Right lobe of liver (tissue), 6 donors: ENCODE measurements at regions of chr4 and their contacts with region 1.

Region 1: GRCh38 chr4:1809754-1810511 is 16.8 kb downstream of the FGFR3 start:
- DNase-seq: peak; percentile 76 to 85 (median 78)
- ATAC-seq: peak; percentile 86 to 91 (median 88)
- H3K4me3 ChIP-seq: no peak overlapping the region
- H3K27ac ChIP-seq: no peak overlapping the region
- H3K4me1 ChIP-seq: peaks cover 0 to 26% (median 11%) of the 10 kb centered on the region in 4 donors
- H3K27me3 ChIP-seq: no peaks in the 10 kb centered on the region
- CTCF ChIP-seq: peak; percentile 85 to 92 (median 89)
- POLR2A ChIP-seq: no peak

Region 2: DNA sequence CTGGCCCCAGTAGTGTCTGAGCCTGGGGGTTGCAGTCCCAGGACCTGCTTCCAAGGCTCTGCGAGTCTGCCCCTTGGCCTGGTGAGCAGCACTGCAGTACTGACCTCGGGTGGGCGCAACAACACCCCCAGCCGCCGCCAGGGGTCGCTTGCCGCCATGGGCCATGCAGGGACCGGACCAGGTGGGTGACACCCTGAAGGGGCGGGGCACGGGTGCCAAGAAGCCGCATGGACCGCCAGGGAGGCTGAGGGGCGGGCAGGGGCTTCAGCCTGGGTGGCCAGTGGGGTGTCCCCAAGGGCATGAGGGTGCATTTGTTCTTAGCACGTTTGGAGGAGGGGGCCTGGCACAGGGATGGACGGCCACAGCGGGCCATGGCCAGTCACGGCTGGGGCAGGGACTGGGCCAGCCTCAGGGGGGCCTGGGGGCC is 63.7 kb before region 1 on chr4:
- intact Hi-C with region 1: loop called (anchors 5 kb)
- DNase-seq: peak in 2 of 3 donors; percentile 68
- ATAC-seq: peak; percentile 6 to 16 (median 14)
- H3K4me3 ChIP-seq: no peak overlapping the region
- H3K27ac ChIP-seq: no peak overlapping the region
- H3K4me1 ChIP-seq: peaks cover 0 to 17% (median 3%) of the 10 kb centered on the region in 4 donors
- H3K27me3 ChIP-seq: no peaks in the 10 kb centered on the region
- CTCF ChIP-seq: peak; percentile 42 to 57 (median 54)
- POLR2A ChIP-seq: no peak

Region 3: GRCh38 chr4:1752284-1753041 is 57.5 kb before region 1 on chr4:
- intact Hi-C with region 1: loop called (anchors 5 kb)
- DNase-seq: no peak
- ATAC-seq: peak; percentile 1 to 20 (median 9)
- H3K4me3 ChIP-seq: no peak overlapping the region
- H3K27ac ChIP-seq: no peak overlapping the region
- H3K4me1 ChIP-seq: no peaks in the 10 kb centered on the region
- H3K27me3 ChIP-seq: no peaks in the 10 kb centered on the region
- CTCF ChIP-seq: no peak
- POLR2A ChIP-seq: no peak